ENCODE measurements at regions of chr3 and their contacts with region 1.

Region 1: GRCh38 chr3:18559331-18559842 is 134.2 kb upstream of the SATB1 start:
- DNase-seq: peak; percentile 32
- ATAC-seq: peak; percentile 37
- H3K4me3 Mint-ChIP-seq: peak overlapping the region; percentile 13
- H3K27ac Mint-ChIP-seq: peak overlapping the region; percentile 95
- H3K4me1 Mint-ChIP-seq: peaks cover 67% of the 10 kb centered on the region
- H3K27me3 Mint-ChIP-seq: no peaks in the 10 kb centered on the region
- CTCF ChIP-seq: peak; percentile 83

Region 2: DNA sequence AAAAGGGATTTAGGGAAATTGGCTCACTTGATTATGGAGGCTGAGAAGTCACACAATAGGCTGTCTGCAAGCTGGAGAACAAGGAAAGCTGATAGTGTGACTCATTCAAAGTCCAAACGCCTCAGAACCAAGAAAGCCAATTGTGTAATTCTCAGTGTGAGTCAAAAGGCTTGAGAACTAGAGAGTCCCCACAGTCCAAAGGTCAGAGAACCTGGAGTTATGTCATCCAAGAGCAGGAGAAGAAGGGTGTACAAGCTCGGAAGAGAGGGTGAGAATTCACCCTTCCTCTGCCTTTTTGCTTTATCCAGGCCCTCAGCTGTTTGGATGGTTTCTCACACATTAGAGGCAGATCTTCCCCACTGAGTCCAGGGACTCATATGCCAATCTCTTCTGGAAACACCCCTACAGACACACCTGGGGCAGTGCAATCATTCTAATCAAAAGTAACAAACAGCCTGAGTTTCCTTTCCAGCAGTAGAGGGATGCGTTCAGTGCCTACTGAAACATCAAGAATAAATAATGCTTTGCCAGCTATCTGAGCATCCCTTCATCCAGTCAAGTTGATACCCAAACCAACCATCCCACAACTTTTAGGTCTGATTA is 405.7 kb before region 1 on chr3:
- CTCF ChIA-PET with region 1: no interaction called
- POLR2A ChIA-PET with region 1: no interaction called
- intact Hi-C with region 1: no loop called
- DNase-seq: no peak
- ATAC-seq: no peak
- H3K4me3 Mint-ChIP-seq: no peak overlapping the region
- H3K27ac Mint-ChIP-seq: no peak overlapping the region
- H3K4me1 Mint-ChIP-seq: no peaks in the 10 kb centered on the region
- H3K27me3 Mint-ChIP-seq: no peaks in the 10 kb centered on the region
- CTCF ChIP-seq: no peak

Region 3: DNA sequence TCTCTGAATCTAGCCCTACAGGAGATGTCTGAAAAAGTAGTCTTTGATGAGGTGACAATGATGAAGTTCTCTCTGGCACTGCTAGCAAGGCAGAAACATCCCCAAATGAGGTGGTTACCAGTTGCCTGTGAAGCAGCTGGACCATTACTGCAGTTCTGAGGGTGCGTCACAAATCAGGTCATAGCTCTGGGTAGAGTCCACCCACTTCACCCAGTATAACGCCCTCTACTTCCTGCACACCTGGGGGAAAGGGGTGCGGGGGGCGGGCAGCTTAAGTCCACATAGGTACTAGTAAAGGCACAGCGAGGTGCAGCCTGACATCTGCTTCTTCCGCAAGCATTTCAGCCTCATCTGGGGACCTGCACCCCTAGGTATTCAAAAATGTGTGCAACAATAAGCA is 120.8 kb before region 1 on chr3:
- CTCF ChIA-PET with region 1: interaction called, 3 read pairs
- POLR2A ChIA-PET with region 1: interaction called, 11 read pairs
- intact Hi-C with region 1: no loop called
- DNase-seq: peak; percentile 80
- ATAC-seq: peak; percentile 82
- H3K4me3 Mint-ChIP-seq: peak overlapping the region; percentile 78
- H3K27ac Mint-ChIP-seq: peak overlapping the region; percentile 86
- H3K4me1 Mint-ChIP-seq: peaks cover 30% of the 10 kb centered on the region
- H3K27me3 Mint-ChIP-seq: no peaks in the 10 kb centered on the region
- CTCF ChIP-seq: no peak

Region 4: GRCh38 chr3:18538463-18539230 is 20.7 kb before region 1 on chr3:
- CTCF ChIA-PET with region 1: no interaction called
- POLR2A ChIA-PET with region 1: no interaction called
- intact Hi-C with region 1: no loop called
- DNase-seq: no peak
- ATAC-seq: no peak
- H3K4me3 Mint-ChIP-seq: no peak overlapping the region
- H3K27ac Mint-ChIP-seq: no peak overlapping the region
- H3K4me1 Mint-ChIP-seq: no peaks in the 10 kb centered on the region
- H3K27me3 Mint-ChIP-seq: no peaks in the 10 kb centered on the region
- CTCF ChIP-seq: no peak

Region 5: DNA sequence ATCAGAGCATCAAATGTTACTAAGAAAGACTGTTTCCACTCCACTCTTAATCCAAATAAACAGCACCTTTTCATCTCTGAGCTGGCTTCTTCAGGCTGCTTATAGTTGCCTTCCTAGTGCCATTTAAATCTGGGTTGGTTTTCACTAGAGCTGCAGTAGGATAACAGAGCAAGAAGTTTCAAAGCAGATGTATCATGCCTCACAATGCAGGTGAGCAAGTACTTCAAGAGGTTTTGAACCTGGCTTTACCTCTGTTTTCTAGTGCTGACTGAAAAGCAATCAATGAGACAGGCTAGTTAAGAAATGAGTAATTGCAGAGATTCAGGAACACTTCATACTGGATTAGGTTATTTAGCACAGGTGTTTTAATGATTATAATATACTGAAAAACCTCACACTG is 13.4 kb after region 1 on chr3:
- CTCF ChIA-PET with region 1: interaction called, 13 read pairs
- POLR2A ChIA-PET with region 1: interaction called, 4 read pairs
- intact Hi-C with region 1: no loop called
- DNase-seq: no peak
- ATAC-seq: peak; percentile 49
- H3K4me3 Mint-ChIP-seq: no peak overlapping the region
- H3K27ac Mint-ChIP-seq: no peak overlapping the region
- H3K4me1 Mint-ChIP-seq: peaks cover 14% of the 10 kb centered on the region
- H3K27me3 Mint-ChIP-seq: no peaks in the 10 kb centered on the region
- CTCF ChIP-seq: no peak

Region 6: GRCh38 chr3:18679238-18679637 is 119.9 kb after region 1 on chr3:
- CTCF ChIA-PET with region 1: interaction called, 5 read pairs
- POLR2A ChIA-PET with region 1: interaction called, 3 read pairs
- intact Hi-C with region 1: loop called (anchors 10 kb)
- DNase-seq: peak; percentile 65
- ATAC-seq: peak; percentile 90
- H3K4me3 Mint-ChIP-seq: peak overlapping the region; percentile 55
- H3K27ac Mint-ChIP-seq: peak overlapping the region; percentile 93
- H3K4me1 Mint-ChIP-seq: peaks cover 78% of the 10 kb centered on the region
- H3K27me3 Mint-ChIP-seq: no peaks in the 10 kb centered on the region
- CTCF ChIP-seq: no peak

Region 7: DNA sequence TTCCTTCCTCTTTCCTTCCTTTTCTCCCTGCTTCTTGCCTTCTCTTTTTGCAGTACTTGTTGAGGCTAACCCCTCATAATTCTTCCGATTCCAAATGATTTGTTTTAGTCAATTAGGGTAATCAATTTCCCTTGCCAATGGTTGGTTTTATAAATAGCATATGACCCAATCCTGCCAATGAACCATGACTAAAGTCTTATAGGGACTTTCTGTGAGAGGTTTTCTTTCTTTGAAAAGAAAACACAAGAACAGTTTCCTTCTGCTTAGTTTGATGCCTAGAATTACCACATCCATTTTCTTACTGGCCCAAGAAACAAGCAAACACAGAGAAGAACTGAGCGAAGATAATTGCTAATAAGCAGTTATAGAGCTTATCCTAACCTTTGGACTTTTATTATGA is 158.2 kb after region 1 on chr3:
- CTCF ChIA-PET with region 1: interaction called, 7 read pairs
- POLR2A ChIA-PET with region 1: interaction called, 6 read pairs
- intact Hi-C with region 1: loop called (anchors 10 kb)
- DNase-seq: no peak
- ATAC-seq: peak; percentile 54
- H3K4me3 Mint-ChIP-seq: no peak overlapping the region
- H3K27ac Mint-ChIP-seq: peak overlapping the region; percentile 97
- H3K4me1 Mint-ChIP-seq: peaks cover 74% of the 10 kb centered on the region
- H3K27me3 Mint-ChIP-seq: no peaks in the 10 kb centered on the region
- CTCF ChIP-seq: no peak

Measured in activated CD8-positive, alpha-beta T cell treated with anti-CD3 and anti-CD28 coated beads for 36 hours (primary cell).